Right ventricle myocardium superior (tissue), 1 donor: ENCODE measurements at regions of chr3 and their contacts with region 1.

Region 1: DNA sequence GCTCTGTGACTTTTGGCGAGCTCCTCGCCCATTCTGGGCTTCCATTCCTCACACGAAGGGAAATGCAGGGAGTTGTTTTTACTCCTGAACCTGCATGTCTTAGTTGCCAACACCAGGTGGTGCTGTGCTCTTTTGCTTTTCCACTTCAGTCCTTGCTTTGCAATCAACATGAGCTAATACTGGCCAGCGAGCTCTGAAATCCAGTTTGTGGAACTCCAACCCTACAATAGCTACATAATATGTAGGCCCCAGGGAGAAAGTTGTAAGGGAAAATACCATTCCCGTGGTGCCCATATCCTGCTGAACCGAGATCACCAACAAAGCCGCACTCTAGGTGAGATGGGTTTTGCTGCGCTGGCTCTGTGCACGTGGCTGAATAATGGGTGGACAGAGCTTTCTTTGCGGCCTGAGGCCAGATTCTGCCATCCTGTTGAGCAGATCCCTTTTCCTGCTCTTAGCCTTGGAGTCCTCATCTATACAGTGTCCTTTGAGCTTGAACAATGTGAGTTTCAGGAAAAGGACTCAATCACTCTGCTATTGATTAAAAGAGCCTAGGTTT is 25.0 kb downstream of the LSM3 start:
- DNase-seq: peak; percentile 48
- ATAC-seq: peak; percentile 83

Region 2: DNA sequence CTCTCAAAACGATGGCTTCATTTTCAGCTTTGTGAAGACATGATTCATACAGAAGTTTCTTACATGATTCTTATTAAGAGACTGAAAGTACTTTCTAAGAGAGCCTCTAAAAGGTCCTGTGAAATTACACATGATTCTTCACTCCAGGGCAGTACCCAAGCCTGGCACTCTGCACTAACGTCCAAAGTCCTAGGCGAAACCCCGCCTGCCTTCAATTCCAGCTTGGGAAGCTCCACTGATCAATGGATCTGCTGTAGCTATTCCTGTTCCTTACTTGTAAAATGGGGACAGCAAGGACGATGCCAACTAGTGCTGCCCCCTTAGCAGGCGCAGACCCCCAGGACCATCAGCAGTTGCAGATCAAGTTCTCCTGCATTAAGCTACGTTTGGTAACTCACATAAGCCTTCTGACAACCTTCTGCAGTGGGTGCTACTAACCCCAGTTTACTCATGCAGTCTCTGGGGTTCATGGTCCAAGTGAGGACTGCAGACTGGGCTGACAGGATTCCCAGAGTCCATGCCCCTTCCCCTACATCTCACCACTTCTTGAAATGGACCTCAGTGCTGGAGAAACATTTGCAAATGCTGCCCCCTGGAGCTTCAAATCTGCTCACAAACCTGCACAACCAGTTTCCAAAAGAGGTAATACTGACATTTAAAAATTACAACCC is 89.5 kb before region 1 on chr3:
- intact Hi-C with region 1: no loop called
- DNase-seq: no peak
- ATAC-seq: no peak

Region 3: DNA sequence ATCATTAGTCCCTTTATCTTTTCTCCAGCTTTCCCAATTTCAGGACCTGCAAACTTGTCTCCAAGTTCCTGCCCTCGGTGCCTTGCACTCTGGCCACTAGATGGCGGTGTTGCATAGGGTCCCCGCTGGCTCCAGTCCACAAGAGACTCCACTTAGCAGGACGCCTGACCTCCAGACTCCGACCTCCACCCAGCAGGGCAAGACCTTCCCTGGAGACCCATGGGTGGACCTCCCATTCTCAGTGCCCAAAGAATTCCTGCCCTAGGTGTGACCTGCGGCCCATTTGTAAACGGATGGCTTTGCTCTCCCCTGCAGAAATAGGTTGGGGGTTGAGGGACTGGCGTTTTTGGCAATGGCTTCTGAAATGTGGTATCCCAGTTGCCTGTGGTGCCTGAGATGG is 57.6 kb after region 1 on chr3:
- intact Hi-C with region 1: loop called (anchors 5 kb)
- DNase-seq: peak; percentile 89
- ATAC-seq: peak; percentile 92